BJ (cell line): ENCODE measurements at regions of chr6 and their contacts with region 1.

Region 1: GRCh38 chr6:30396833-30397479 is 52.0 kb downstream of the RPP21 start:
- DNase-seq: no peak
- H3K4me3 ChIP-seq: no peak overlapping the region
- H3K27me3 ChIP-seq: peaks cover 13% of the 10 kb centered on the region
- CTCF ChIP-seq: peak; percentile 95

Region 2: GRCh38 chr6:30172681-30173080 is 224.3 kb before region 1 on chr6:
- CTCF ChIA-PET with region 1: no interaction called
- POLR2A ChIA-PET with region 1: no interaction called
- DNase-seq: no peak
- H3K4me3 ChIP-seq: no peak overlapping the region
- H3K27me3 ChIP-seq: peaks cover 33% of the 10 kb centered on the region
- CTCF ChIP-seq: no peak

Region 3: DNA sequence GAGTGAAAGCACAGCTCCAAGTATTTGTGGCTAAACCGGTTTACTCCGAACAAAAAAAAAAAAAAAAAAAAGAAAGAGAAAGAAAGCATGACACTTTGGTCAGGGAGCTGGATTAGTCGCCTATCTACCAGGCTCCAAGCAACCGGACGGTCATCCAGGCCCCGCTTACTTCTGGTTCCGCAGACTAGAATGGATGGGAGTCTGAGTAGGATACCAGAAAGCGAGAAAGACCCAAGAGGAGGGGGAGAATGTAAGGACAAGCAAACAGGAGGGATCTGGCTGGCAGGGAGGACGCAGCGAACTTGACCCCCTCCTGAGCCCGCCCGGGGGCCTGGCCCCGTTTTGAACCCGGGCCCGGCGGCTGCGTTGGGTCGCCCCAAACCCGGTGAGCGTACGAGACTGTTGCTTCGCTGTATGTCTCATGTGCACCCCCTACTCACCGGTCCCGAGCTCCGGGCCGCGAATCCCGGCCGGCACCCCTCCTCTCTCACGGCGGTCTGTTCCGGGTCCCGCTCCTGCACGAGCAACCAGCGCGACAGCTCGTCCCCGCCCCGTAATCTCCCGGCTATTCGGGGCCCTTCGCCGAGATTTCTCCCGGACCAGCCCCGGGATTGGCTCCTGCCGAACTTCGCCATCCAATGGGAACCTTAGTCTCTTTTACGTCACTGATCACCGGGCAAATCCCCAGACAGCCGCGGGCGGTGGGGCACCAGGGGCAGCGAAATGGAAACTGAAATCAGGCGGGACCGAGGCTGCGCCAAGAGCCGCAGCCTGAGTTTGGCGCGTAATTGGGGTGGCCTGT is 183.9 kb before region 1 on chr6 and contains the start of gene TRIM26:
- CTCF ChIA-PET with region 1: interaction called, 42 read pairs
- POLR2A ChIA-PET with region 1: no interaction called
- DNase-seq: peak; percentile 83
- H3K4me3 ChIP-seq: peak within 1 kb of the TSS; percentile 79
- H3K27me3 ChIP-seq: no peaks in the 10 kb centered on the region
- CTCF ChIP-seq: no peak
- polyA plus RNA-seq, gene TRIM26: 31.8 and 41.8 TPM in 2 replicates

Region 4: DNA sequence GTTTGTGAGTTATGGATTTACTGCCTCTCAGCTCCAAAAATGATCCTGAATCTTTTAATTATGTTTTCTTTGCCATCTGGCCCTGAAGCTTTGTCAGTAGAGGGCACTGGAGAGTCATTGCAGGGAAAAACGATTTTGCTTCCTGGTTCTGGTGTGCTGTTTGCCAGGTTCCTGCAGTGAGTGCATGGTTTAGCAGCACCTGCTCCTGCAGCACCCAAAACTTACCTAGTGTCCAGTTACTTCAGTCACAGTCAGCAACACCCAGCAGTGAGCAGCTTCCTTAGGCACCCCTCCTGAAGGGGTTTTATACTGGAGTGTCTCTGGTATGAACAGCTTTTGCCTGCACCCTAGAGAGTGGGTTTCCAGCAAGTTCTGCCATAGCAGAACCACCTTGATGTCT is 177.7 kb before region 1 on chr6:
- CTCF ChIA-PET with region 1: interaction called, 42 read pairs
- POLR2A ChIA-PET with region 1: no interaction called
- DNase-seq: no peak
- H3K4me3 ChIP-seq: no peak overlapping the region
- H3K27me3 ChIP-seq: no peaks in the 10 kb centered on the region; the same call in none of the 2 replicates
- CTCF ChIP-seq: peak; percentile 93

Region 5: GRCh38 chr6:30238174-30238795 is 158.7 kb before region 1 on chr6:
- CTCF ChIA-PET with region 1: interaction called, 17 read pairs
- POLR2A ChIA-PET with region 1: no interaction called
- DNase-seq: no peak
- H3K4me3 ChIP-seq: no peak overlapping the region
- H3K27me3 ChIP-seq: no peaks in the 10 kb centered on the region; the same call in 1 of the 2 replicates
- CTCF ChIP-seq: peak; percentile 48

Region 6: DNA sequence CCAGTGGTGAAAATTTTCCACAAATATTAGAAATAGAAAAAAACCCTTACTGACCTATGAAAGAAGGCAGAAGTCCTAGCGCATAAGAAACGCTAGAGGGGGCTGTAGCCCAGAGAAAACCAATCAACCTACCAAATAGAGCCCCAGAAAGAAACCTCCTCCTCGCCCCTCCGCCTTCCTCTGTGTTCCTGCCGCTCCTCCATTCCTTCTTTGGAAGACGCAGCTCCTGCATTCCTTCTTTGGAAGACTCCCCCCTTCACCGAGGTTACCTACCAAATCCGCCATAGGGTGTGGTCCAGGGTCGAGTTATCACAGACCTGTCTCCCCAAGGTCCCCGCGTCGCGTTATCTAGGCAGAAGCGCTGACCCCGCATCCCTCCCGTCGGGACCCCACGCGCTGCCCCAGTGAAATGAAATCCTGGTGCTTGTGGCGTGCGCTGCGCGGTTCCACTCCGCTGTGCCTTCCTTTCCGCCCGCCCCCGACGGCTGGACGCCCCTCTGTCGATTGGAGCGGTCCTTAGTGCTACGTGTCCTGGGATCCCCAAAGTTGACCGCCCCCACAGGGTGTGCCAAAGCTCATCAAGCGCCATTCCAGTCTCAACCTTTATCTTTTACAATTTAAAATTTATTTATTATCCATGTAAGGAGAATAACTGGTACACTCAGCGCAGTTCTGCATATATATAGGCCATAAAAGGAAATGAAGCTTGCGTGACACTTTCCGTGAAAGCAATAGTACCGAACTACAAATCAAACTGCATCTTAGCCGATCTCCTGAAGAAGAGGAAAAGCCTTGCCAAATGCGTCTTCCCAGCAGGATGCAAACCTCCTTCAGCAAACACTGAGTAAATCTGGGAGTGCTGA is 39.0 kb before region 1 on chr6:
- CTCF ChIA-PET with region 1: interaction called, 15 read pairs
- POLR2A ChIA-PET with region 1: no interaction called
- DNase-seq: peak; percentile 16
- H3K4me3 ChIP-seq: peak overlapping the region; percentile 36
- H3K27me3 ChIP-seq: peaks cover 31% of the 10 kb centered on the region
- CTCF ChIP-seq: peak; percentile 76